Posterior cingulate gyrus (tissue), 11 donors: ENCODE measurements at regions of chr7 and their contacts with region 1.

Region 1: DNA sequence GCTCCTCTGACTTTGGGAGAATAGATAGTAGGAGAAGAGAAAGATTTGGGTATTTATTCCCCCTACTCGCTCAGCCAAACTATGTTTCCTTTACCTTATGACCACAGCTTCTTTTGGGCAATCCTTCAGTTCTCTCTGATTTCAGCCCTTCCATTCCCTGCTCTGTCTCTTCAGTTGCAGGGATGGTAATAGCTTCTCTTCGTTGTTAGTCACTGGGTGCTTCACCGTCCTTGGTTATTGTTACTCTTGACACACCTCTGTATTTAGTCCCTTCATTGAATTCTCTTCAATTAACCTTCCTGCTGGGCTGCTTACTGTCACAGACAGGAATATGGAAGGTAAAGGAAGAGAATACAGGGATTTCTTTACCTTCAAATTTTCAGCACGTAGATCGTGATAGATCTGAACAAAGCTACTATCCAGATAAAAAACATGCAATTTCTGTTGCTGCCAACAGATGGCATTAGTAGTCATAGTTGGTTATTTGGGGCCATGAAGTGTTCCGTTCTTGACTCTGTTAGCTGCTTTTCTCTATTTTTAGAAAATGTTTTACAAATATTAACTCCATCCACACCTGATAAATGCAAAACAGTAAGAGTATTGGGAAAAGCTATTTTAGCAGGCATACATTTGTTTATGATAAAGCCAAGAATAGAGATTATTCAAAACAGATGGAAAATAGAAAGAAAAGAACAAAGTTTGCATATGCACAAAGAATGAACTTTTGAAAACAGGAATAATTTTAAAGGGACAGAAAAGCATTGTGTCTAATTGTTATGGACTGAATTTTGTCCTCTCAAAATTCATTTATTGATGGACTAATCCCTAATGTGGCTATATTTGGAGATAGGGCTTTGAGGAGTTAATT is 14.0 kb upstream of the PTTG1IP2 start:
- DNase-seq: no peak

Region 2: GRCh38 chr7:90629297-90629918 is 174.0 kb after region 1 on chr7:
- intact Hi-C with region 1: loop called (anchors 5 kb)
- DNase-seq: no peak